Cardiac septum (tissue), 1 donor: ENCODE measurements at regions of chr1 and their contacts with region 1.

Region 1: GRCh38 chr1:77759071-77760028 is at the start of gene USP33:
- DNase-seq: peak; percentile 96
- total RNA-seq, gene USP33: 26.3 TPM

Region 2: DNA sequence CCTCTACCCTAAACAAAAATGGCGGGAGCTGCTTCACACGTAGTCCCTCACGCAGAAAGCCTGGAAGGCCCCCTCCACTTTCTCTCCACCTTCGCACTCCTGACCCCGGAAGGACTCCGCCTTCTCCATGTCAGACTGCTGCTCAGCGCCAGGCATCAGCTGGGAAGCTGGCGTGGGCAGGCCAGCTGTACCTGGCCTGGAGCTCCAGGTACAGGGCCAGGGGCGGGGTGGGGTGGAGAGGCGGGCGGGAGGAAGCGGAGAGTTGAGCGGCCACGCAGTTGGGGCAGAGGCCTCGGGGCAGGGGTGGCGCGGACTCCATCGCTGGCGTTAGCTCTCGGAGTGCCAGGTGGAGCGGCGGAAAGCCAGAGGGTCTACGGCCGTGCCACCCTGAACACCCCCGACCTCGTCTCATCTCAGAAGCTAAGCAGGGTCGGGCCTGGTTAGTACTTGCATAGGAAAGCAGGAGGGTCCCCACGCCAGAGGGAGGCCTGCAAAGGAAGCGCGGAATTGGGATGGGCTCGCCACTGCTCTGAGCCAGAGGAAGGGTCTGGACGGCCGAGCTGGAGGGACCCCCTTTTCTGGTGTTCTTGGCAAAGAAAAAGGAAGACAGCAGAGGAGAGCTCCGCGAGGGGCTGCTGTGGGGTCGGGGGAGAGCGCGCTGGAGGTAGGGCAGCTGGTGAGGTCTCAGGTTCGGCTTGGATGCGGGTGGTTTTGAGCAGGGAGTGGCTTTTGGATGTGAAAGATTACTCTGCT is 20.4 kb after region 1 on chr1 and contains the start of gene MIGA1:
- intact Hi-C with region 1: loop called (anchors 2 kb)
- DNase-seq: peak; percentile 93
- total RNA-seq, gene MIGA1: 11.1 TPM

Region 3: GRCh38 chr1:77797991-77798390 is 38.6 kb after region 1 on chr1:
- intact Hi-C with region 1: no loop called
- DNase-seq: no peak

Region 4: DNA sequence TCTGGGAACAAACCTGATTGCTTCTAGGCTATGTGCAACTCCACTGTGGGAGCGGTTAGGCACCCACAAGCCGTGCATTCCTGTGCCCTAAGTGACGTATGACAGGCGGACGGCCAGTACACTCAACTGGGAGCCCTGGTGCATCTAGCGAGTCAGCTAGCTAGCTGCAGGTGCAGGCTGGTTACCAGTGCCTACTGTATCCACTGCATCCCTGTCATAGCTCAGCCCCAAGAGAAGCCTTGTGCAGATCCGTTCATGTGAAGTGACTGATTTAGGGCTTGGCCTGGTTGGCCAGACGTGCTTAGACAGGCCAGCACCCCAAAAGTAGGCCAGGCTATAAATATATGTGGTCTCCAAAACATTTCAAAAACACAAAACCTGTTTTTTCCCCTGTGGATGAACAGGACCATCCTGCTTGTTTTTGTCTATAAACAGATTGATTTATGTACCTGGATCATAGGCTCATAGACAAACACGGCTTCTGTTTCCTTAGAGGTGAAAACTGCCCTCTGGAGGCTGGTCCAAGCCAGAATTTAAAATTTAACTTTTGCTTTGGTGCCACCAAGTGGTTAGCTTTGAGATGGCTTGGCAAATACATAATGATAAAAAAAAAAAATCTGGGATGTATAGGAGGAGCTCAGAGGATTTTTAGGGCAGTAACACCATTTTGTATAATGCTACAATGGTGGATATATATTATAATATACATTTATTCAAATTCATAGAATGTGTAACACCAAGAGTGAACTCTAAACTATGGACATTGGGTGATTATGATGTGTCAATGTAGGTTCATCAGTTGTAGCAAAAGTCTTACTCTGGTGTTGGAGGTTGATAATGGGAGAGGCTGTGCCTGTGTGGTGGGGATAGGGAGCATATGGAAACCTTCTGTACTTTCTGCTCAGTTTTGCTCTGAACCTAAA is 354.9 kb after region 1 on chr1:
- intact Hi-C with region 1: no loop called
- DNase-seq: no peak